ENCODE measurements at regions of chr9 and their contacts with region 1.

Region 1: GRCh38 chr9:35096035-35096849 is at the start of gene PIGO:
- DNase-seq: peak; percentile 89 to 92 (median 92)
- H3K4me3 ChIP-seq: peak within 1 kb of the TSS; percentile 87
- H3K4me3 Mint-ChIP-seq: peak within 1 kb of the TSS; percentile 85 to 91 (median 86)
- H3K27ac ChIP-seq: peak within 1 kb of the TSS; percentile 92
- H3K27ac Mint-ChIP-seq: peak within 1 kb of the TSS; percentile 91 to 99 (median 94)
- H3K4me1 ChIP-seq: peaks cover 15% of the 10 kb centered on the region
- H3K4me1 Mint-ChIP-seq: peaks cover 17 to 60% (median 34%) of the 10 kb centered on the region in 4 donors
- H3K27me3 ChIP-seq: no peaks in the 10 kb centered on the region
- H3K27me3 Mint-ChIP-seq: no peaks in the 10 kb centered on the region
- total RNA-seq, gene PIGO: 23.4 to 29.7 TPM

Region 2: DNA sequence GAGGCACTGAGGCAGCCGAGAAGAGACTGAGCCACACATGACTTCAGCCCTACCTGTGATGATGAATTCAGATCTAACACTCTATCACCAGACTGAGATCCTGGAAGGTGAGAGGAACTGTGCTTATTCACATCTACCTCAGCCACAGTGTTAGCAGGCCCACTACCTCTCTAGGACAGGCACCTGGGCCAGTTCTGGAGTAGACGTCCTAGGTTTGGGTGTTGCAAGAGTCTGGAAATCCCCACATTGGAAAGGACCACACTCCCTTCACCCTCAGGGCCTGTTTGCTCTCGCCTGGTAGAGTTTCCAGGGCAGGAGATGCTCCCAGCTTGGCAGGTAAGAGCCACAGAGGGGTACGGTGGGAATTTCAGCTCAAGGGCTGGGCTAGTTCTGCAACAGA is 272.5 kb before region 1 on chr9:
- CTCF ChIA-PET with region 1: no interaction called
- POLR2A ChIA-PET with region 1: no interaction called
- intact Hi-C with region 1: no loop called
- DNase-seq: no peak
- H3K4me3 ChIP-seq: no peak overlapping the region
- H3K4me3 Mint-ChIP-seq: no peak overlapping the region
- H3K27ac ChIP-seq: no peak overlapping the region
- H3K27ac Mint-ChIP-seq: no peak overlapping the region
- H3K4me1 ChIP-seq: no peaks in the 10 kb centered on the region
- H3K4me1 Mint-ChIP-seq: no peaks in the 10 kb centered on the region
- H3K27me3 ChIP-seq: no peaks in the 10 kb centered on the region
- H3K27me3 Mint-ChIP-seq: peaks cover 25 to 27% of the 10 kb centered on the region in 2 donors

Region 3: DNA sequence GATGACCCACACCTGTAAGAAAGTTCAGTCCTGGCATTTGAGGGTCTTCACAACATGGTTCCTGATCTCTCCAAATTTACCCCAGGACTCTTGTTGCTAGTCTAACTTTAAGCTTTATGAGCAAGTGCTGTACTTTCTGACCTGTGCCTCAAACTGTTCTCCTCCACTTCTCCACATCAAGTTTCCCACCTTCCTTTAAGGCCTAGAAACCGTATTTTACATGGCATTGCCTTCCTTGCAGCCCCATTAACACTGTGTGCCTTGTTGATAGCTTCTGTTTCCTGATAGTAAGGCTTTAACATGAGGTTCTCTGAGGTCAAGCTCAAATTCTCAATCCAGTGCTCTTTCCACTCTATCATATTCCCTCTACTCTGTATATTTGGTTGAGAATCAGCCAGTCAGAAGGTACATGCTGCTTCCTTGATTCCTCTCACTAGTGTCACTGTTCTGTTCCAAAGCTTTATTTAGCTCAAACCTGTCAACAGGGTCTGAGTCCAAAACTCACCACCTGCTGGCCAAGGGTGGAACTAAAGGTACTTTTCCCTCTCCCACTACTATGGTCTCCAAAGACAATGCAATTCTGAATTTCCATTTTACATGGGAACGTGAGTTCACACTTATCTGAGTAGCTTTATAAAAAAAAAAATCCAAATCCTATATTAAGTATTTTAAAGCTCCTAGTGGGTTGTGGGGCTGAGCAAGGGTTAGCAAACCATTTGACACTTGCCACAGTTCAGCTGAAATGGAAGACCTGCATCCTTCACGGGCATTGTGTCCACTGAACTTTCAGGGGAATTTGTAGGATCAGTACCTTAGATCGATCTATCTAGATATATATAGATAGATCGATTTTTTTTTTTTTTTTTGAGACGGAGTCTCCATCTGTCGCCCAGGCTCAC is 44.9 kb before region 1 on chr9:
- CTCF ChIA-PET with region 1: interaction called, 19 read pairs
- POLR2A ChIA-PET with region 1: no interaction called
- intact Hi-C with region 1: no loop called
- DNase-seq: peak; percentile 28 to 51 (median 36)
- H3K4me3 ChIP-seq: no peak overlapping the region
- H3K4me3 Mint-ChIP-seq: no peak overlapping the region
- H3K27ac ChIP-seq: no peak overlapping the region
- H3K27ac Mint-ChIP-seq: no peak overlapping the region
- H3K4me1 ChIP-seq: no peaks in the 10 kb centered on the region
- H3K4me1 Mint-ChIP-seq: peaks cover 0 to 13% (median 5%) of the 10 kb centered on the region in 4 donors
- H3K27me3 ChIP-seq: no peaks in the 10 kb centered on the region
- H3K27me3 Mint-ChIP-seq: no peaks in the 10 kb centered on the region

Region 4: GRCh38 chr9:35111001-35111933 is 15.0 kb after region 1 on chr9:
- CTCF ChIA-PET with region 1: interaction called, 18 read pairs
- POLR2A ChIA-PET with region 1: interaction called, 38 read pairs
- intact Hi-C with region 1: loop called (anchors 1 kb)
- DNase-seq: peak; percentile 91 to 98 (median 94)
- H3K4me3 ChIP-seq: peak overlapping the region; percentile 47 to 54
- H3K4me3 Mint-ChIP-seq: peak overlapping the region; percentile 67 to 94 (median 81)
- H3K27ac ChIP-seq: peak overlapping the region; percentile 82
- H3K27ac Mint-ChIP-seq: peak overlapping the region; percentile 88 to 96 (median 91)
- H3K4me1 ChIP-seq: peaks cover 52% of the 10 kb centered on the region
- H3K4me1 Mint-ChIP-seq: peaks cover 41 to 63% (median 47%) of the 10 kb centered on the region in 4 donors
- H3K27me3 ChIP-seq: no peaks in the 10 kb centered on the region
- H3K27me3 Mint-ChIP-seq: no peaks in the 10 kb centered on the region